ENCODE measurements at regions of chr11 and their contacts with region 1.

Region 1: GRCh38 chr11:126700773-126701519 is 299.6 kb downstream of the KIRREL3 start:
- DNase-seq: peak; percentile 42
- ATAC-seq: peak; percentile 88
- H3K4me3 ChIP-seq: no peak overlapping the region
- H3K27ac ChIP-seq: no peak overlapping the region; the same call in 1 of the 2 replicates
- H3K4me1 ChIP-seq: peaks cover 16% of the 10 kb centered on the region
- H3K27me3 ChIP-seq: no peaks in the 10 kb centered on the region; a peak in 1 of 4 replicates
- CTCF ChIP-seq: no peak
- EP300 ChIP-seq: peak; percentile 94 to 96; a peak in 3 of 4 replicates
- POLR2A ChIP-seq: no peak
- RAD21 ChIP-seq: no peak

Region 2: GRCh38 chr11:126655807-126656128 is 45.2 kb before region 1 on chr11:
- CTCF ChIA-PET with region 1: interaction called, 3 read pairs
- POLR2A ChIA-PET with region 1: no interaction called
- RAD21 ChIA-PET with region 1: no interaction called
- SMC1A ChIA-PET with region 1: no interaction called
- in situ Hi-C with region 1: no loop called
- intact Hi-C with region 1: loop called (anchors 2 kb)
- DNase-seq: no peak
- ATAC-seq: no peak; the same call in 2 of the 3 replicates
- H3K4me3 ChIP-seq: no peak overlapping the region
- H3K27ac ChIP-seq: no peak overlapping the region
- H3K4me1 ChIP-seq: no peaks in the 10 kb centered on the region
- H3K27me3 ChIP-seq: peaks cover 3 to 7% of the 10 kb centered on the region in 2 experiments; a peak in 3 of 4 replicates
- CTCF ChIP-seq: no peak
- EP300 ChIP-seq: no peak
- POLR2A ChIP-seq: no peak
- RAD21 ChIP-seq: no peak

Measured in GM12878 (cell line).